Mammary epithelial cell (primary cell): ENCODE measurements at regions of chr5 and their contacts with region 1.

Region 1: GRCh38 chr5:78638423-78638822 is 10.1 kb downstream of the LHFPL2 start:
- DNase-seq: peak; percentile 98
- H3K4me3 ChIP-seq: no peak overlapping the region
- H3K27ac ChIP-seq: peak overlapping the region; percentile 85
- H3K4me1 ChIP-seq: peaks cover 44% of the 10 kb centered on the region
- H3K27me3 ChIP-seq: no peaks in the 10 kb centered on the region
- CTCF ChIP-seq: no peak

Region 2: DNA sequence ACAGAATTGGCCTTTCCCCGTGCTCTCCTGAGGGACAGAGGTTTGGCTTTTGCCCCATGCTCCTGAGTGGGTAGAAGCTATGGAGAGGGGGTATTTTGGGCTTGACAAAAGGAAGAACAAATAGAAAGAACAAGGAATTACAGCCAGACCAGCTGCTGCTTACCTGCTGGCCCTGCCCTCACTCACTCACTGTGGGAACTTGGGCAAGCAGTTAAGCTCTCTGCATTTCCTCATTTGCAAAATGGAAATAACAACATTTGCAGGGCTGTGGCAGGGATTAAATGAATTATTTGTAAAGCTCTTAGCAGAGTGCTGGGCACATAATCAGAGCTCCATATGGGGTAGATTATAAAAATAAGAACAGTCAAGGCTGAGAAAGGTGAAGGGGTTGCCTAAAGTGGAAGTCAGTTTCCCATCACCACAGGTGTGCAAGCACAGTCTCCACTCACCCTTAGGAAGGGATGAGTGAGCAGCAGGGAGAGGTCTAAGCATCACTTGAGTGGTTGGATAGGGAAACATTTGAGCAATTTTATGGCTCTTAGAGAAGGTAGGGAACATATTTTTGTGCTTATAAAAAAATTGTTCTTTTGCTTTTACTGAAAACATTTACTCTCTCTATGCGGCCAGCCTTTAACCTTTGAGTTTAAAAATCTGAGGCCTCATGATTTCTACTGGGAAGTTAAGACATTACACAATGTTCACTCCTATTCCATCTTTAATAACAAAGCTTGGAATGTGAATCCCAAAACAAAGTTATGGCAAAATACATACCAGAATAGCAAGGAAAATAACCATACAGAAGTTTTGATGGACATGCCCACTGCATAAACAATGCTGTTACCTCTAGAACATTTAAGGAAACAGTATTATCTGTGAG is 52.9 kb after region 1 on chr5:
- CTCF ChIA-PET with region 1: no interaction called
- dilution Hi-C with region 1: loop called (anchors 5 kb)
- in situ Hi-C with region 1: no loop called
- intact Hi-C with region 1: no loop called
- DNase-seq: no peak
- H3K4me3 ChIP-seq: no peak overlapping the region
- H3K27ac ChIP-seq: no peak overlapping the region
- H3K4me1 ChIP-seq: no peaks in the 10 kb centered on the region
- H3K27me3 ChIP-seq: no peaks in the 10 kb centered on the region
- CTCF ChIP-seq: no peak